Activated CD4-positive, alpha-beta T cell treated with anti-CD3 and anti-CD28 coated beads for 36 hours (primary cell): ENCODE measurements at regions of chr7 and their contacts with region 1.

Region 1: GRCh38 chr7:48389977-48390376 is 218.7 kb downstream of the ABCA13 start:
- DNase-seq: no peak
- ATAC-seq: peak; percentile 68
- H3K4me3 Mint-ChIP-seq: no peak overlapping the region
- H3K27ac Mint-ChIP-seq: no peak overlapping the region
- H3K4me1 Mint-ChIP-seq: peaks cover 8% of the 10 kb centered on the region
- H3K27me3 Mint-ChIP-seq: no peaks in the 10 kb centered on the region

Region 2: GRCh38 chr7:48376263-48376662 is 13.7 kb before region 1 on chr7:
- CTCF ChIA-PET with region 1: no interaction called
- POLR2A ChIA-PET with region 1: no interaction called
- intact Hi-C with region 1: no loop called
- DNase-seq: no peak
- ATAC-seq: no peak
- H3K4me3 Mint-ChIP-seq: no peak overlapping the region
- H3K27ac Mint-ChIP-seq: no peak overlapping the region
- H3K4me1 Mint-ChIP-seq: no peaks in the 10 kb centered on the region
- H3K27me3 Mint-ChIP-seq: no peaks in the 10 kb centered on the region

Region 3: GRCh38 chr7:48458701-48459524 is 68.9 kb after region 1 on chr7:
- CTCF ChIA-PET with region 1: no interaction called
- POLR2A ChIA-PET with region 1: no interaction called
- intact Hi-C with region 1: loop called in 1 of 2 experiments (anchors 10 kb)
- DNase-seq: no peak
- ATAC-seq: no peak
- H3K4me3 Mint-ChIP-seq: no peak overlapping the region
- H3K27ac Mint-ChIP-seq: no peak overlapping the region
- H3K4me1 Mint-ChIP-seq: no peaks in the 10 kb centered on the region
- H3K27me3 Mint-ChIP-seq: peaks cover 6% of the 10 kb centered on the region